CD8-positive, alpha-beta T cell (primary cell): ENCODE measurements at regions of chr5 and their contacts with region 1.

Region 1: GRCh38 chr5:178153573-178154343 is at the start of gene NHP2:
- DNase-seq: peak; percentile 92 to 98 (median 97)
- ATAC-seq: peak; percentile 99
- H3K4me3 ChIP-seq: peak within 1 kb of the TSS; percentile 81 to 94
- H3K4me3 Mint-ChIP-seq: peak within 1 kb of the TSS; percentile 97
- H3K27ac ChIP-seq: peak within 1 kb of the TSS; percentile 51 to 62
- H3K27ac Mint-ChIP-seq: peak within 1 kb of the TSS; percentile 92
- H3K4me1 ChIP-seq: peaks cover 12% of the 10 kb centered on the region
- H3K4me1 Mint-ChIP-seq: peaks cover 26% of the 10 kb centered on the region
- H3K27me3 ChIP-seq: no peaks in the 10 kb centered on the region
- H3K27me3 Mint-ChIP-seq: no peaks in the 10 kb centered on the region
- CTCF ChIP-seq: no peak
- total RNA-seq, gene NHP2: 48.8 to 49.6 TPM

Region 2: DNA sequence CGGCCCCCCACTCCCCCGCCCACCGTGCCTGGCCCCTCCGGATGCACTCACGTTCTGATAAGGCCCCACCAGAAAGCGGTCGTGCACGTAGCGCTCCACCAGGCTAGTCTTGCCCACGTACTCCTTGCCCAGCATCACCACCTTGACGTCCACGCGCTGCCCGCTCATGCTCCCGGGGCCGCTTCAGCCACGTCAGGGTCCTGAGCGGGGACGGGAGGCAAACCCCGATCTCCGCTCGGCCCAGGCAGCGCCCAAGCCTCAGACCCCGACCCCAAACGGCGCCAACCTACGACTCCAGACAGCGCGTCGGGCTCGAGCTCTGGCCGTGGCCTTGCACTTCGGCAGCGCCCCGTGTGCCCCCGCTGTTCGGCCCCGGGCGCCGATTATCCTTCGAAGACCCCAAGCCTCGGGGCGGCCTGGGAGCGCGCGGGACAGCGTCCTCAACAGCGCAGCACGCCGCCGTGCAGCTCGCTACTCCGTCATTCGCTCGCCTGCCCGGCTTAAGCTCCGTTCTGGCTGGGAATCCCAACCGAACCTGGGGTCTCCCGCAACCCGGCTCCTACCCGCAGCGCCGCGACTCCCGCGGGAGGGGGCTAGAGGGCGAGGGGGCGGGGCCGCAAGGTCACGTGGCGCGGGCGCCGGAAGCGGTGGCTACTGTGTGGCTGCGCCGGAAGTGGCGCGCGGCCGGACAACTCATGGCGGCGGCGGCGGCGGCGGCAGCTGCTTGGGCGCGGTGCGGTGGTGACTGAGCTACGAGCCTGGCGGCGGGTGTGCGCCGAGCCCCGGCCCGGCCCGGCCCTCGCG is 850.4 kb before region 1 on chr5 and contains the starts of genes PRELID1 and RAB24:
- CTCF ChIA-PET with region 1: no interaction called
- POLR2A ChIA-PET with region 1: no interaction called
- intact Hi-C with region 1: loop called in 1 of 2 experiments (anchors 5 kb)
- DNase-seq: peak; percentile 71 to 94 (median 88)
- ATAC-seq: peak; percentile 54
- H3K4me3 ChIP-seq: peak within 1 kb of the TSS; percentile 71 to 80
- H3K4me3 Mint-ChIP-seq: peak within 1 kb of the TSS; percentile 93
- H3K27ac ChIP-seq: peak within 1 kb of the TSS; percentile 71 to 78
- H3K27ac Mint-ChIP-seq: peak within 1 kb of the TSS; percentile 91
- H3K4me1 ChIP-seq: peaks cover 57% of the 10 kb centered on the region
- H3K4me1 Mint-ChIP-seq: peaks cover 65% of the 10 kb centered on the region
- H3K27me3 ChIP-seq: no peaks in the 10 kb centered on the region
- H3K27me3 Mint-ChIP-seq: no peaks in the 10 kb centered on the region
- CTCF ChIP-seq: no peak
- total RNA-seq, gene PRELID1: 15.5 to 23.7 TPM
- total RNA-seq, gene RAB24: 14.1 to 19.8 TPM

Region 3: DNA sequence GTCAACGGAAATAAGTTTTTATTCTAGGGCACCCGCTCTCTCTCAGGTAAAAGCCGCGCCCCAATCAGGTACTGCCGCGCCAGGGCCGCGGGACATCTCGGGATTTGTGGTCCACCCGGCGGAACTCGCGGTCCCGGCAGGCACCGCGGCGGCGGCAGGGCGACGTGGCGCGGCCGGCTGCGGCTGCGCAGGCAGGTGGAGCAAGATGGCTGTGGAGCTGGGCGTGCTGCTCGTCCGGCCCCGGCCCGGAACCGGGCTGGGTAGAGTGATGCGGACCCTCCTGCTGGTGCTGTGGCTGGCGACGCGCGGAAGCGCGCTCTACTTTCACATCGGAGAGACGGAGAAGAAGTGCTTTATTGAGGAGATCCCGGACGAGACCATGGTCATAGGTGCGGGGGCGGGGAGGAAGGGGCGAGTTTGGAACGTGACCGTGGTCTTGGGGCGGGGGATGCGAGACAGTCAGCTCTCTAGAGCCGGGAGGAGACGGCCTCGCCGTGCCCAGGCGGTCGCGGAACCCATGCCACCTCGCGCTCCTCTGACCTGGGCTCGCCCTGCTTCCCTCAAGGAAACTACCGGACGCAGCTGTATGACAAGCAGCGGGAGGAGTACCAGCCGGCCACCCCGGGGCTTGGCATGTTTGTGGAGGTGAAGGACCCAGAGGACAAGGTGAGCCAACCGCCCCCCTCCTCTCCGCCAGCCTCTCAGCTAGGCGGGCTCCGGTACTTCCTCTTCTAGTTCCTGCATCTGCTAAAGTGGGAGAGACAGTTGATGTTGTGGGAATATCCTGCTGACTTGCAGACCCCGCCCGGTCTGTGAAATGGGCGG is 561.5 kb before region 1 on chr5 and contains the start of gene TMED9:
- CTCF ChIA-PET with region 1: no interaction called
- POLR2A ChIA-PET with region 1: no interaction called
- intact Hi-C with region 1: loop called in 1 of 2 experiments (anchors 5 kb)
- DNase-seq: peak; percentile 69 to 92 (median 86)
- ATAC-seq: peak; percentile 98
- H3K4me3 ChIP-seq: peak within 1 kb of the TSS; percentile 97 to 100
- H3K4me3 Mint-ChIP-seq: peak within 1 kb of the TSS; percentile 99
- H3K27ac ChIP-seq: peak within 1 kb of the TSS; percentile 78 to 88
- H3K27ac Mint-ChIP-seq: peak within 1 kb of the TSS; percentile 93
- H3K4me1 ChIP-seq: peaks cover 19% of the 10 kb centered on the region
- H3K4me1 Mint-ChIP-seq: peaks cover 24% of the 10 kb centered on the region
- H3K27me3 ChIP-seq: peaks cover 0 to 3% of the 10 kb centered on the region in 2 experiments
- H3K27me3 Mint-ChIP-seq: peaks cover 13% of the 10 kb centered on the region
- CTCF ChIP-seq: no peak
- total RNA-seq, gene TMED9: 42.4 to 52.2 TPM

Region 4: GRCh38 chr5:178120868-178121357 is 32.8 kb before region 1 on chr5:
- CTCF ChIA-PET with region 1: interaction called, 10 read pairs
- POLR2A ChIA-PET with region 1: interaction called, 11 read pairs
- intact Hi-C with region 1: loop called in 1 of 2 experiments (anchors 1 kb)
- DNase-seq: peak; percentile 71 to 93 (median 87)
- ATAC-seq: peak; percentile 72
- H3K4me3 ChIP-seq: peak overlapping the region; percentile 9 to 23
- H3K4me3 Mint-ChIP-seq: peak overlapping the region; percentile 60
- H3K27ac ChIP-seq: no peak overlapping the region
- H3K27ac Mint-ChIP-seq: peak overlapping the region; percentile 73
- H3K4me1 ChIP-seq: peaks cover 76% of the 10 kb centered on the region
- H3K4me1 Mint-ChIP-seq: peaks cover 56% of the 10 kb centered on the region
- H3K27me3 ChIP-seq: peaks cover 0 to 3% of the 10 kb centered on the region in 2 experiments
- H3K27me3 Mint-ChIP-seq: no peaks in the 10 kb centered on the region
- CTCF ChIP-seq: peak; percentile 73

Region 5: GRCh38 chr5:178204182-178204894 is 50.6 kb after region 1 on chr5 and contains the start of gene HNRNPAB:
- CTCF ChIA-PET with region 1: no interaction called
- POLR2A ChIA-PET with region 1: interaction called, 8 read pairs
- intact Hi-C with region 1: loop called (anchors 1 kb)
- DNase-seq: peak; percentile 92 to 99 (median 96)
- ATAC-seq: peak; percentile 75
- H3K4me3 ChIP-seq: peak within 1 kb of the TSS; percentile 65 to 73
- H3K4me3 Mint-ChIP-seq: peak within 1 kb of the TSS; percentile 98
- H3K27ac ChIP-seq: peak within 1 kb of the TSS; percentile 60 to 80
- H3K27ac Mint-ChIP-seq: peak within 1 kb of the TSS; percentile 98
- H3K4me1 ChIP-seq: peaks cover 28% of the 10 kb centered on the region
- H3K4me1 Mint-ChIP-seq: peaks cover 41% of the 10 kb centered on the region
- H3K27me3 ChIP-seq: no peaks in the 10 kb centered on the region
- H3K27me3 Mint-ChIP-seq: no peaks in the 10 kb centered on the region
- CTCF ChIP-seq: no peak
- total RNA-seq, gene HNRNPAB: 67.3 to 76.2 TPM